PC-3 (cell line): ENCODE measurements at regions of chr10 and their contacts with region 1.

Region 1: DNA sequence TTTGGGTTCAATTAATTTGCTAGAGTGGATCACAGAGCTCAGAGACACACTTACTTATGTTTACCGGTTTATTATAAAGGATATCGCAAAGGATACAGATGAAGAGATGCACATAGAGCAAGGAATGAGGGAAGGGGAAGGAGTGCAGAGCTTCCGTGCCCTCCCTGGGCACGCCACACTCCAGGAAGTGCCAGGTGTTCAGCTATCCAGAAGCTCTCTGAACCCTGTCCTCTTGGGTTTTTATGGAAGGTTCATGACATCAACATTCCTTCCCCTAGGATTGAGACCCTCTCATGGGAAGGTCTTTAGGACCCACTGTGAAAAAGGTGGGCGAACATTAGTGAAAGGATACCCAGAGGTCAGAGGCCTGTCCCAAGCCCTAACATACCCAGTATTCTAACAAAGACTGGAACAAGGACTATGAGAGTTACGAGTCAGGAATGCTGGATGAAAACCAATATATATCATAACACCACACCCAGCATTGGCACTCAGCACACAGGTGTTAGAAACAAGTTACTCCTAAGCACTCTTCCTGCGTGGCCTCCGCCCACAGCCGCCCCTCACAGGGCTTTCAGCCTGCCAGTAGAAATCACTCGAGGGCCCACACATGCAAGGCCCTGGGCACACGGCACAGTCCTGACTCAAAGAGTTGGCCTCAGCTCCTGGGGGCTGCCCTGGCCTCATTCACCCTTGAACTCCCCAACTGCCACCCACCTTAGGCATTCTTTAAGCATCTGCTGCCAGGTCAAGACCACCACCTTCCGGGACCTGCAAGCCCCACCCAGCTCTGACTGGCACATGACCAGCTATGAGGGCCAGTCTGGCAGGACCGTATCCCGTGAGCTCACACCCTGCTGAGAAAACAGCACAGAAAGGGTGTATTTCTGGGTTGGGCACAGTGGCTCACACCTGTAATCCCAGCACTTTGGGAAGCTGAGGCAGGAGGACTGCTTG is 5.6 kb upstream of the AIFM2 start:
- DNase-seq: peak; percentile 46
- ATAC-seq: peak; percentile 27
- H3K4me3 ChIP-seq: no peak overlapping the region
- H3K27ac ChIP-seq: no peak overlapping the region
- H3K4me1 ChIP-seq: peaks cover 7% of the 10 kb centered on the region
- H3K27me3 ChIP-seq: no peaks in the 10 kb centered on the region
- CTCF ChIP-seq: no peak

Region 2: GRCh38 chr10:70115948-70116682 is 22.1 kb before region 1 on chr10:
- CTCF ChIA-PET with region 1: interaction called, 19 read pairs
- POLR2A ChIA-PET with region 1: no interaction called
- intact Hi-C with region 1: no loop called
- DNase-seq: peak; percentile 86
- ATAC-seq: peak; percentile 85
- H3K4me3 ChIP-seq: no peak overlapping the region
- H3K27ac ChIP-seq: no peak overlapping the region
- H3K4me1 ChIP-seq: no peaks in the 10 kb centered on the region
- H3K27me3 ChIP-seq: no peaks in the 10 kb centered on the region
- CTCF ChIP-seq: peak; percentile 100